ENCODE measurements at regions of chr9 and their contacts with region 1.

Region 1: DNA sequence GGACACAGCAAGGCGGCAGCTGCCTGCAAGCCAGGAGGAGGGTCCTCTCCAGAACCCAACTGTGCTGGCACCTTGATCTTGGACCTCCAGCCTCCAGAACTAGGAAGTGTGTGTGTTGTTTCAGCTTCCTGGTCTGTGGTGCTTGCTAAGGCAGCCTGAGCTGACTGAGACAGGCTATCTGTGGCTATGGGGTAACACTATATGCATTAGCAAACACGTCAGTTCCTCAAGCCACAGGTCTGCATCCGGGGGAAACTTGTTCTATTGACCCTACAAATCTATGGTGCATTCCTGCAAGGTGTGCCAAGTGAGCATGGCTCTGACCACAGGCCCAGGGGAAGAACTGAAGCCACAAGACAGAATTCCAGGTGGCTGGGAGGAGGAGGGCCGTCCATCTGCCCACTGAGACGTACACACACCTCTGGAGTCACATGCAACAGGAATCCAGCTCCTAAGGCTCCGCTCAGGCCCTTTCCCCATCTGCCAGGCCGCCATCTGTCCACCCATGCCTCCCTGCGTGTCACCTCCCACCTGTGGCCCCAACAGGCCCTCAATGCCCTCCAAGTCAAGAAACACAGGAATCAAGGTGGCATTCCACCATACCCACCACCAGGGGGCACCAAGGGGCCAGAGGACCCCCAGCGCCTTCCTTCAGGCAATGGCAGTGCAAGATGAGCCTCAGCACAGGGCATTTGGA is 174.9 kb downstream of the ROR2 start:
- DNase-seq: peak; percentile 40 to 59
- ATAC-seq: peak; percentile 52 to 76 (median 70)
- H3K4me3 ChIP-seq: no peak overlapping the region
- H3K27ac ChIP-seq: no peak overlapping the region
- H3K4me1 ChIP-seq: peaks cover 0 to 18% (median 0%) of the 10 kb centered on the region in 9 donors
- H3K27me3 ChIP-seq: peaks cover 0 to 41% (median 10%) of the 10 kb centered on the region in 7 donors
- CTCF ChIP-seq: peak; percentile 60 to 87 (median 79)

Region 2: GRCh38 chr9:91978739-91979414 is 203.7 kb after region 1 on chr9:
- intact Hi-C with region 1: loop called in 1 of 10 experiments (anchors 5 kb)
- DNase-seq: no peak
- ATAC-seq: no peak
- H3K4me3 ChIP-seq: no peak overlapping the region
- H3K27ac ChIP-seq: no peak overlapping the region
- H3K4me1 ChIP-seq: no peaks in the 10 kb centered on the region
- H3K27me3 ChIP-seq: peaks cover 0 to 5% (median 0%) of the 10 kb centered on the region in 7 donors
- CTCF ChIP-seq: peak in 7 of 9 donors; percentile 25 to 39 (median 32)